ENCODE measurements at regions of chr15 and their contacts with region 1.

Region 1: GRCh38 chr15:63212050-63213004 is 22.9 kb downstream of the RAB8B start:
- DNase-seq: peak in 3 of 14 experiments; percentile 46 to 64 (median 50)
- ATAC-seq: peak; percentile 47
- H3K4me3 ChIP-seq: no peak overlapping the region
- H3K4me3 Mint-ChIP-seq: peak overlapping the region; percentile 3
- H3K27ac ChIP-seq: peak overlapping the region in 1 of 2 donors; percentile 12
- H3K27ac Mint-ChIP-seq: peak overlapping the region; percentile 40
- H3K4me1 ChIP-seq: peaks cover 41% of the 10 kb centered on the region
- H3K4me1 Mint-ChIP-seq: peaks cover 72% of the 10 kb centered on the region
- H3K27me3 ChIP-seq: no peaks in the 10 kb centered on the region
- H3K27me3 Mint-ChIP-seq: no peaks in the 10 kb centered on the region
- CTCF ChIP-seq: no peak

Region 2: DNA sequence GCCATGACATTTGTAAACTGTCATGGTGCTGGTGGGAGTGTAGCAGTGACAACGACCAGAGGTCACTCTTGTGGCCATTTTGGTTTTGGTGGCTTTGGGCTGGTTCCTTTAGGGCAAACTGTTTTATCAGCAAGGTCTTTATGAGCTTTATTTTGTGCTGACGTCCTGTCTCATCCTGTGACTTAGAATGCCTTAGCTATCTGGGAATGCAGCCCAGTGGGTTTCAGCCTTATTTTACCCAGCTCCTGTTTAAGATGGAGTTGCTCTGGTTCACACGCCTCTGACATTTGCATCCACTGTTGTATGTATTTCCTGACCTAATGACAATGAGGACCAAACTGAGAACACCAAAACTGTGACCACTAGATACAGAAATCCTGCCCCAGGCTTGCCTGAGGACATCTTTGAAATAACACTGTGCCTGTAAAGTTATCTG is 14.7 kb after region 1 on chr15:
- CTCF ChIA-PET with region 1: interaction called, 4 read pairs
- POLR2A ChIA-PET with region 1: interaction called, 8 read pairs
- intact Hi-C with region 1: loop called in 1 of 2 experiments (anchors 2 kb)
- DNase-seq: no peak
- ATAC-seq: no peak
- H3K4me3 ChIP-seq: no peak overlapping the region
- H3K4me3 Mint-ChIP-seq: no peak overlapping the region
- H3K27ac ChIP-seq: peak overlapping the region in 1 of 2 donors; percentile 4
- H3K27ac Mint-ChIP-seq: peak overlapping the region; percentile 86
- H3K4me1 ChIP-seq: peaks cover 16% of the 10 kb centered on the region
- H3K4me1 Mint-ChIP-seq: peaks cover 83% of the 10 kb centered on the region
- H3K27me3 ChIP-seq: no peaks in the 10 kb centered on the region
- H3K27me3 Mint-ChIP-seq: no peaks in the 10 kb centered on the region
- CTCF ChIP-seq: no peak

Region 3: GRCh38 chr15:63277038-63277892 is 64.9 kb after region 1 on chr15 and contains the start of gene APH1B:
- CTCF ChIA-PET with region 1: no interaction called
- POLR2A ChIA-PET with region 1: no interaction called
- intact Hi-C with region 1: loop called in 1 of 2 experiments (anchors 5 kb)
- DNase-seq: peak; percentile 61 to 94 (median 79)
- ATAC-seq: peak; percentile 88
- H3K4me3 ChIP-seq: peak within 1 kb of the TSS; percentile 86
- H3K4me3 Mint-ChIP-seq: peak within 1 kb of the TSS; percentile 91
- H3K27ac ChIP-seq: peak within 1 kb of the TSS; percentile 71 to 80
- H3K27ac Mint-ChIP-seq: peak within 1 kb of the TSS; percentile 82
- H3K4me1 ChIP-seq: peaks cover 25% of the 10 kb centered on the region
- H3K4me1 Mint-ChIP-seq: peaks cover 48% of the 10 kb centered on the region
- H3K27me3 ChIP-seq: no peaks in the 10 kb centered on the region
- H3K27me3 Mint-ChIP-seq: no peaks in the 10 kb centered on the region
- CTCF ChIP-seq: no peak
- total RNA-seq, gene APH1B: 9.3 to 11.6 TPM

Region 4: DNA sequence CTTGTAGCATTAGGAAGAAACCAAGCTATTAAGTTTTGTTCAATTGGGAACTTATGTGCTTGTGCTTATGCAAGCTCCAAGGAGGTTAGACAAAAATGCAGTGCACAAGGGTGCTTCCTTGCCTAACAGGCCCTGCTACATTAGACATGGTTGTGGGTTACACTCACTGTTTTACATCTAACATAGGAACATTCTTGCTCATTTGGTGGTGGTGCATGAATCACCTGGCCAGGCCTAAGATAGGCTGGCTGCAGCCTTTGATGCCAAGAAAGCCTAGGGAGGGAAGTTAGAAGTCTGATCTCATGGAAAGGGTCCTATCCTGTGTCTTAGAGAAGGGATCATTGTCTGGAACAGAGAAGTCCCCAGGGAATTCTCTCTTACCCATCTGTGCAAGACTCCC is 125.8 kb after region 1 on chr15:
- CTCF ChIA-PET with region 1: no interaction called
- POLR2A ChIA-PET with region 1: no interaction called
- intact Hi-C with region 1: no loop called
- DNase-seq: no peak
- ATAC-seq: no peak
- H3K4me3 ChIP-seq: no peak overlapping the region
- H3K4me3 Mint-ChIP-seq: no peak overlapping the region
- H3K27ac ChIP-seq: no peak overlapping the region
- H3K27ac Mint-ChIP-seq: no peak overlapping the region
- H3K4me1 ChIP-seq: no peaks in the 10 kb centered on the region
- H3K4me1 Mint-ChIP-seq: no peaks in the 10 kb centered on the region
- H3K27me3 ChIP-seq: peaks cover 0 to 5% of the 10 kb centered on the region in 2 experiments
- H3K27me3 Mint-ChIP-seq: no peaks in the 10 kb centered on the region
- CTCF ChIP-seq: no peak